ENCODE measurements at regions of chr3 and their contacts with region 1.

Region 1: DNA sequence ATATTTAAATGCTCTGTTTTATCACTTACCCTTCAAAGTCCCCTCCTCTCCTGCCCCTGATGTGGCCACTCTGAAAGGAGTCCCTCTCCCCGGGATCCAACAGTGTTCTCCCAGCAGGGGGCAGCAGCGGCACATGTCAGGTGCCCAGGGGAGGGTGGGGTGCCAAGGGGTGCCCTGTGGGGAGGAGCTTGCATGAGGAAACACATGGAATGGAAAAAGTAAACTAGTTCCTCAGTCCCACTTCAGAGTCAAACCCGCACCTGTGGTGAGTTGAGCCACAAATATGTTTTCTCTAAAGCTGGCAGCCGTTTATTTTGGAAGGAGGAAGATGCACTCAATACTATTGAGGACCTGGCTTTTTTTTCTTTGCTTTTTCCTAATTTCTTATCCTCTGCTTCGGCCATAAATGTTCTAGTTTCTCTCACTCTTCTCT is 30.1 kb upstream of the NRROS start:
- DNase-seq: peak; percentile 96

Region 2: GRCh38 chr3:196684548-196685407 is 75.4 kb after region 1 on chr3:
- intact Hi-C with region 1: loop called (anchors 2 to 5 kb)
- DNase-seq: peak; percentile 83